ENCODE measurements at regions of chr13 and their contacts with region 1.

Region 1: DNA sequence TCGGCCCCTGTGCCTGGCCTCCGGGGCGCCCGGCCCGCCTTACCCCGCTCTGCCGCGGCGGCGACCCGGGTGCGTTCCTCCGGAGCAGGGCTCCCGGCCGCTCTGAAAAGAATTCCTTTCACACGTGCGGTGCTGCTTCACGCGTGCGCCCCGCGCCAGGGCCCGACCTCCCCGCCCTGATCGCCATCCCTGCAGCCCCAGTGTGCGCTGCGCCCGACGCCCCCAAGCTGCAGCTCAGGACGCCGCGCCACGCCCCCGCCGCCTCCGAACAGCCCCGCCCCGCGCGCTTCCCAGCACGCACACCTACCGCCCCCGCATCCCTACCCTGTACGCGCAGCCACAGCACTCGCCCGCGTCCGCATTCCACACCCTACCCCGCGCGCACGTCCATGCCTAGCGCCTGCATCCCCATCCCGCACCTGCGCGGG is at the start of gene GJA3:
- DNase-seq: no peak
- ATAC-seq: peak; percentile 26
- H3K4me3 ChIP-seq: peak within 1 kb of the TSS; percentile 6
- H3K27ac ChIP-seq: no peak within 1 kb of the TSS
- H3K4me1 ChIP-seq: no peaks in the 10 kb centered on the region
- H3K27me3 ChIP-seq: no peaks in the 10 kb centered on the region
- total RNA-seq, gene GJA3: 0.19 to 0.42 TPM

Region 2: GRCh38 chr13:19984430-19985218 is 176.2 kb before region 1 on chr13:
- intact Hi-C with region 1: loop called in 1 of 2 experiments (anchors 10 kb)
- DNase-seq: no peak
- ATAC-seq: no peak
- H3K4me3 ChIP-seq: no peak overlapping the region
- H3K27ac ChIP-seq: no peak overlapping the region
- H3K4me1 ChIP-seq: peaks cover 0 to 2% of the 10 kb centered on the region in 2 donors
- H3K27me3 ChIP-seq: no peaks in the 10 kb centered on the region

Region 3: GRCh38 chr13:20064128-20064527 is 96.7 kb before region 1 on chr13:
- intact Hi-C with region 1: loop called in 1 of 2 experiments (anchors 10 kb)
- DNase-seq: no peak
- ATAC-seq: no peak
- H3K4me3 ChIP-seq: no peak overlapping the region
- H3K27ac ChIP-seq: no peak overlapping the region
- H3K4me1 ChIP-seq: no peaks in the 10 kb centered on the region
- H3K27me3 ChIP-seq: no peaks in the 10 kb centered on the region

Region 4: GRCh38 chr13:20127577-20128466 is 33.0 kb before region 1 on chr13:
- intact Hi-C with region 1: loop called in 1 of 2 experiments (anchors 5 kb)
- DNase-seq: peak; percentile 79 to 90
- ATAC-seq: peak; percentile 91
- H3K4me3 ChIP-seq: peak overlapping the region; percentile 29 to 40
- H3K27ac ChIP-seq: peak overlapping the region; percentile 9 to 50
- H3K4me1 ChIP-seq: no peaks in the 10 kb centered on the region
- H3K27me3 ChIP-seq: no peaks in the 10 kb centered on the region

Region 5: DNA sequence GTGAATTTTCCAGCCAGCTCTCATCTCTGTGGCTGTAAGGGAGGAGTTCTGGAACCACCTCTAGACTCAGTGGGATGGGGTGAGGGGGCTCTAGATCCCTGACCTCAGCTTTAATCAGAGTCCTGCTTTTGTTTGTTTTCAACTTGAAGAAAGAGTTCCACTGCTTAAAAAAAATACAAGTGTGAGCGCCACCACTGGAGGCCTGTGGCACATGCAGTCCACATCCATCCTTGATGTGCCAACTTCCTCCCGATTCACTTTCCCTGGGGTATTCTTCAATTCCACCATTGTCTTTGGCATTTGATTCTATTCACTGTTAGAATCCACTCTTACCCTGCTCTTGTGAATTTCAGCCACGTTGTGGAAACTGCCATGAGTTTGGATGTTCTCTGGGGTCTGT is 133.6 kb after region 1 on chr13:
- intact Hi-C with region 1: no loop called
- DNase-seq: no peak
- ATAC-seq: no peak
- H3K4me3 ChIP-seq: no peak overlapping the region
- H3K27ac ChIP-seq: no peak overlapping the region
- H3K4me1 ChIP-seq: no peaks in the 10 kb centered on the region
- H3K27me3 ChIP-seq: no peaks in the 10 kb centered on the region

Measured in aorta (tissue), 5 donors.